ENCODE measurements at regions of chr20 and their contacts with region 1.

Region 1: GRCh38 chr20:21235484-21236445 is 67.4 kb upstream of the XRN2 start:
- DNase-seq: peak; percentile 54 to 57
- ATAC-seq: peak; percentile 49 to 78 (median 73)
- H3K4me3 ChIP-seq: no peak overlapping the region
- H3K27ac ChIP-seq: no peak overlapping the region
- H3K4me1 ChIP-seq: peaks cover 0 to 7% (median 5%) of the 10 kb centered on the region in 9 donors
- H3K27me3 ChIP-seq: no peaks in the 10 kb centered on the region
- CTCF ChIP-seq: peak; percentile 46 to 81 (median 73)

Region 2: DNA sequence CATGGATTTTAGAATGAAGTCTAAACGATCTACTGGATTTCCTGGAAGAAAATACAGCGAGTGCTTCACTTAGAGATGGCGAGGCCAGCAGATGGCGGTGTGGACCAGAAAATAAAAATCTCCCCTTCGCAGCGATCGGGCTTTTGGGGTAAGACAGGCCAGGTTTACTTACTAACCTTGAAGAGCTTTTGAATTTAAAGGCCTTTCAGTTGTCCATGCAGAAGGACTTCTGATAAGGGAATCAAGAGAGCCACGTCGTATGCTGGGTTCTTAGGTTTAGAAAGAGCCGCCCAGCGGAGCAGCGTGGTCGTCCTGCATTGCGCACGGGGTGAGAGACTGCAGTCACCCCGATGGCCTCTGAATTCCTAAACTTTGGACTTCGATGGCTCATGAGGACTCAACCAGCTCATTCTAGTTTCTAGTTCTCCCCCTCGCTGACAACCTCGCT is 398.2 kb before region 1 on chr20:
- intact Hi-C with region 1: loop called in 1 of 10 experiments (anchors 10 kb)
- DNase-seq: peak; percentile 40 to 41
- ATAC-seq: peak in 4 of 8 donors; percentile 34 to 54 (median 52)
- H3K4me3 ChIP-seq: peak overlapping the region in 9 of 10 donors; percentile 3 to 39 (median 21)
- H3K27ac ChIP-seq: no peak overlapping the region
- H3K4me1 ChIP-seq: peaks cover 0 to 7% (median 4%) of the 10 kb centered on the region in 9 donors
- H3K27me3 ChIP-seq: peaks cover 0 to 48% (median 24%) of the 10 kb centered on the region in 7 donors
- CTCF ChIP-seq: peak; percentile 32 to 82 (median 72)

Region 3: GRCh38 chr20:20860078-20860806 is 375.5 kb before region 1 on chr20:
- intact Hi-C with region 1: loop called in 7 of 10 experiments (anchors 10 kb)
- DNase-seq: peak; percentile 84 to 89
- ATAC-seq: peak; percentile 64 to 93 (median 80)
- H3K4me3 ChIP-seq: no peak overlapping the region
- H3K27ac ChIP-seq: no peak overlapping the region
- H3K4me1 ChIP-seq: peaks cover 0 to 2% (median 0%) of the 10 kb centered on the region in 9 donors
- H3K27me3 ChIP-seq: peaks cover 0 to 44% (median 31%) of the 10 kb centered on the region in 7 donors
- CTCF ChIP-seq: peak; percentile 74 to 96 (median 94)

Region 4: DNA sequence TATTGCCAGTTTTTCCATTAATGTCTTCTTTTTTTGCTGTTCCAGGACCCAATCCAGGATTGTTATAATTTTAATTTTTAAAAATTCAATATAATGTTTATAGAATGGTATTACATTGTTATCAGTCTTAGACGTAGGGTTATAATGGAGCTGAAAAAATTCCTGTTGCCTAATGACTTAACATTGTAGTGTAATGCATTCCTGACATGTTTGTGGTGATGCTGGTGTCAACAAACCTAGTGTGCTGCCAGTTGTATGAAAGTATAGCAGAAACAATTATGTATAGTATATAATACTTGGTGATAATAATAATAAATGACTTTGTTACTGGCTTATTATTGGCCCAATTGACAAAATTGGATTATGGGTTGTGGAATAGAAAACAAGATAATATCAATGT is 79.5 kb before region 1 on chr20:
- intact Hi-C with region 1: no loop called
- DNase-seq: no peak
- ATAC-seq: no peak
- H3K4me3 ChIP-seq: no peak overlapping the region
- H3K27ac ChIP-seq: no peak overlapping the region
- H3K4me1 ChIP-seq: no peaks in the 10 kb centered on the region
- H3K27me3 ChIP-seq: no peaks in the 10 kb centered on the region
- CTCF ChIP-seq: no peak

Region 5: DNA sequence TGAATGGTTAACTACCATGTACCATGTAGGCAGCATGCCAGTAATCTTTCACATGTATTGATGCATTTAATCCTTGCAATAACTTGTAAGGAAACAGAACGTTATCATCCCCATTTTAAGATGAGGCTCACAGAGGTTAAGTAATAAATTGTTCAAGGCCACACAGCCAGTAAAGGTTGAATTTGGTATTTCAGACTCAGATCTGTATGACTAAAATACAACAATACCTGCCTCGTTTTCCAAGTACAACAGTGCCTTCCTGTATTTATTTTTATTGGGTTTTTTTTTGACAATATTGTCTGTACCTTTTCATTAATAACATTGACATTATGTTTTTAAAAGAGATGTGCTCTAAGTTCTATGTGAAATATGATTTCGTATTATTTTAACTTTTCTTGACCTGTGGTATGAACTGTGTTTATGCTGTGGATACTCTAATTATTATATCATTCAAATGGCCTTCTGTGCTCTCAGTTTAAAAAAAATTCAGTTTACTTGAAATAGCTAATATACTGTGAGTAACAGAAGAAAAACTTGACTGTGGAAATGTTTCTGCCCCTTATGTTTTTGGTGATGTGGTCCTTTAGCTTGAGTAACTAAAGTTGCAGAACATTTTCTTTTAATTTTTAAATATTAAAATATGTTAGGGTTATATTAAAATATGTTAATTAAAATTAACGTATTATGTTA is 107.0 kb after region 1 on chr20:
- intact Hi-C with region 1: loop called in 1 of 10 experiments (anchors 10 kb)
- DNase-seq: no peak
- ATAC-seq: no peak
- H3K4me3 ChIP-seq: no peak overlapping the region
- H3K27ac ChIP-seq: no peak overlapping the region
- H3K4me1 ChIP-seq: peaks cover 0 to 3% (median 0%) of the 10 kb centered on the region in 9 donors
- H3K27me3 ChIP-seq: no peaks in the 10 kb centered on the region
- CTCF ChIP-seq: no peak

Region 6: DNA sequence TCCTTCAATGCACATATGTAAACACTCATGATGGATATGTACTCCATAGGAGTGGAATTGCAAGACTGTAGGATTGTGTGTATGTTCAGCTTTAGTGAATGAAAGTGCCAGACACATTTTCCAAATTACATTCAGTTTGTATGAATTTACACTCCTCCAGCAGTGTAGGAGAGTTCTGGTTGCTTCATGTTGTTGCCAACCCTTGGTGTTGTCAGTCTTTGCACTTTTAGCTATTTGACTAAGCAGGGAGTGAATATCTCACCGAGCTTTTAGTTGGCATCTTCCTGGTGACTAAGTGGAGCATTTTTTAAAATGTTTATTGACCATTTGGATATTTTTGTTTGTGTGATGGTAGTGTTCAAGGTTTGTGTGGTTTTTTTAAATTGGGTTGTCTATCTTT is 137.7 kb after region 1 on chr20:
- intact Hi-C with region 1: loop called in 1 of 10 experiments (anchors 10 kb)
- DNase-seq: no peak
- ATAC-seq: no peak
- H3K4me3 ChIP-seq: no peak overlapping the region
- H3K27ac ChIP-seq: no peak overlapping the region
- H3K4me1 ChIP-seq: peaks cover 0 to 7% (median 0%) of the 10 kb centered on the region in 9 donors
- H3K27me3 ChIP-seq: no peaks in the 10 kb centered on the region
- CTCF ChIP-seq: no peak

Region 7: DNA sequence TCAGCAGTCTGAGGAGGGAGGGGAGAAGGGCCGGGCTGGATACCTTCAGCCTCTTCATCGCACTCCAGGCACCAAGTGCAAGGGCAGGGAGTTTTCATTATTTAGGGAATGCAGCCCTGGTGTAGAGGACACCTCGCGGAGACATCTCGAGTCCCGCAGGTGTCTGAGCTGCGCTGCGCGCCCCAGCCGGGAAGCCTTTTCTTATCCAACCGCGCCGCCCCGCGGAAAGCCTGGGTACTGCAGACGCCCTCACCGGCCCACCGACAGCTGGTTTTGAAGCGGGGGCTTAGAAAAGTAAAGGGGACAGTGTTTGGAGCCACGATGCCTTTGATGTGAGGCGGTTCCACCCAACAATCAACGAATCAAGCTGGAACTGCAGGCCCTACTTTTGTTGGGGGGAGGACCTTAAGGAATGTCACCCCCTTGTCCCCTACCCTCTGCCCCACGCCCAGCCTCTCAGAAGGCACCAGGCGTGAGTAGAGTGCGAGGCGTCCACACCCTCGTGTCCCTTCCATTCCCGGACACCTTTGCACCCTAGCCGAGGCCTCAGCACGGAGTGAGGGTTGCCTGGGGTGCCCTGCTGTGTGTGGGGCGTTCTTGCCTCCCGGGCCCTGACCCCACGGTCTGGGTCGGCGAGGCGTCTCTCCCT is 269.5 kb after region 1 on chr20:
- intact Hi-C with region 1: loop called (anchors 1 to 5 kb)
- DNase-seq: peak; percentile 54 to 66
- ATAC-seq: peak; percentile 54 to 77 (median 66)
- H3K4me3 ChIP-seq: peak overlapping the region in 9 of 10 donors; percentile 18 to 51 (median 40)
- H3K27ac ChIP-seq: no peak overlapping the region
- H3K4me1 ChIP-seq: peaks cover 4 to 36% (median 23%) of the 10 kb centered on the region in 9 donors
- H3K27me3 ChIP-seq: peaks cover 36 to 100% (median 96%) of the 10 kb centered on the region in 7 donors
- CTCF ChIP-seq: peak; percentile 86 to 98 (median 94)

Region 8: GRCh38 chr20:21571841-21572690 is 336.3 kb after region 1 on chr20:
- intact Hi-C with region 1: loop called in 4 of 10 experiments (anchors 5 kb)
- DNase-seq: no peak
- ATAC-seq: no peak
- H3K4me3 ChIP-seq: no peak overlapping the region
- H3K27ac ChIP-seq: no peak overlapping the region
- H3K4me1 ChIP-seq: no peaks in the 10 kb centered on the region
- H3K27me3 ChIP-seq: peaks cover 4 to 59% (median 36%) of the 10 kb centered on the region in 7 donors
- CTCF ChIP-seq: peak; percentile 79 to 87 (median 83)